ENCODE measurements at regions of chr16 and their contacts with region 1.

Region 1: GRCh38 chr16:30571695-30572600 is at the start of gene ZNF688:
- DNase-seq: peak; percentile 99
- H3K4me3 ChIP-seq: peak within 1 kb of the TSS; percentile 42 to 95 (median 84)
- H3K27ac ChIP-seq: peak within 1 kb of the TSS; percentile 94 to 98 (median 97)
- H3K4me1 ChIP-seq: peaks cover 0 to 24% (median 21%) of the 10 kb centered on the region in 4 donors
- H3K27me3 ChIP-seq: no peaks in the 10 kb centered on the region
- CTCF ChIP-seq: no peak
- EP300 ChIP-seq: no peak
- POLR2A ChIP-seq: peak; percentile 33 to 66
- total RNA-seq, gene ZNF688: 21.9 to 32.8 (median 25.4) TPM

Region 2: DNA sequence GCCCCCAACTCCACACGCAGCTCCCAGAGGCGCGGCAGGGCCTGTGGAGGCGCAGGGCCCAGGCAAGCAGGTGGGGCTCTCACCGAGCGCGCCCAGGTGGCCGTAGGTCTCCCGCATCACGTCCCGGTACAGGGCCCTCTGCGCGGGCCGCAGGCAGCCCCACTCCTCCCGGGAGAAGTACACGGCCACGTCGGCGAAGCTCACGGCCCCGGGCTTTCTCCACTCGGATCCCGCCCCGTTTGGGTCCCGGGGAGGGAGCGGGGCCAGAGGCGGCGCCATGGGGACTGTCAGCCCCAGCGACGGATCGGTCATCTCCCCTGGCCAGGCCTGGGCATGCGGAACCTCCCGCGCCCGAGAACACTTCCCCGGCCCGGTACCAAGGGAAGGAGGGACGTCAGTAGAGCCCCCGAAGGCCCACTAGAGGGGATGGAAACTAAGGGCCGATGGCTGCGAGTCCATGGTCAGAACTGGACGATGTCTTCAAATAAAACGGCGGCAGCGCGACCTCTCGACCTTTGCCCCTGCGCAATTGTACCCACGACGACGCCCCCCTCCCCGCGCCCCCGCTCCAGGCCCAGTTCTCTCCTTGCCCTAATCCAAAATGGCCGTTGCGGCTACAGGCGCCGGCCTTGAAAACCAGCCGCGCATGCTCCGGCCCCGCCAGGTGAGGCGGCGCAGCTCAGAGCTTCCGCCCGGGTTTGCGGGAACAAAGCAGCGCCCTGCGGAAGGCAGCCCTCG is 37.4 kb before region 1 on chr16 and contains the start of gene ZNF747:
- intact Hi-C with region 1: loop called (anchors 5 kb)
- DNase-seq: peak; percentile 97
- H3K4me3 ChIP-seq: peak within 1 kb of the TSS; percentile 45 to 85 (median 66)
- H3K27ac ChIP-seq: peak within 1 kb of the TSS; percentile 89 to 97 (median 94)
- H3K4me1 ChIP-seq: peaks cover 0 to 31% (median 25%) of the 10 kb centered on the region in 4 donors
- H3K27me3 ChIP-seq: no peaks in the 10 kb centered on the region
- CTCF ChIP-seq: no peak
- EP300 ChIP-seq: no peak
- POLR2A ChIP-seq: peak; percentile 50 to 65
- total RNA-seq, gene ZNF747: 10.3 to 15.5 (median 13.1) TPM

Region 3: GRCh38 chr16:30557957-30558788 is 13.8 kb before region 1 on chr16 and contains the start of gene ZNF764:
- intact Hi-C with region 1: loop called (anchors 1 kb)
- DNase-seq: peak; percentile 99
- H3K4me3 ChIP-seq: peak within 1 kb of the TSS; percentile 49 to 87 (median 84)
- H3K27ac ChIP-seq: peak within 1 kb of the TSS; percentile 89 to 98 (median 96)
- H3K4me1 ChIP-seq: peaks cover 0 to 32% (median 28%) of the 10 kb centered on the region in 4 donors
- H3K27me3 ChIP-seq: no peaks in the 10 kb centered on the region
- CTCF ChIP-seq: no peak
- EP300 ChIP-seq: no peak
- POLR2A ChIP-seq: peak in 1 of 2 donors; percentile 22
- total RNA-seq, gene ZNF764: 6.1 to 8.6 (median 8.1) TPM

Region 4: DNA sequence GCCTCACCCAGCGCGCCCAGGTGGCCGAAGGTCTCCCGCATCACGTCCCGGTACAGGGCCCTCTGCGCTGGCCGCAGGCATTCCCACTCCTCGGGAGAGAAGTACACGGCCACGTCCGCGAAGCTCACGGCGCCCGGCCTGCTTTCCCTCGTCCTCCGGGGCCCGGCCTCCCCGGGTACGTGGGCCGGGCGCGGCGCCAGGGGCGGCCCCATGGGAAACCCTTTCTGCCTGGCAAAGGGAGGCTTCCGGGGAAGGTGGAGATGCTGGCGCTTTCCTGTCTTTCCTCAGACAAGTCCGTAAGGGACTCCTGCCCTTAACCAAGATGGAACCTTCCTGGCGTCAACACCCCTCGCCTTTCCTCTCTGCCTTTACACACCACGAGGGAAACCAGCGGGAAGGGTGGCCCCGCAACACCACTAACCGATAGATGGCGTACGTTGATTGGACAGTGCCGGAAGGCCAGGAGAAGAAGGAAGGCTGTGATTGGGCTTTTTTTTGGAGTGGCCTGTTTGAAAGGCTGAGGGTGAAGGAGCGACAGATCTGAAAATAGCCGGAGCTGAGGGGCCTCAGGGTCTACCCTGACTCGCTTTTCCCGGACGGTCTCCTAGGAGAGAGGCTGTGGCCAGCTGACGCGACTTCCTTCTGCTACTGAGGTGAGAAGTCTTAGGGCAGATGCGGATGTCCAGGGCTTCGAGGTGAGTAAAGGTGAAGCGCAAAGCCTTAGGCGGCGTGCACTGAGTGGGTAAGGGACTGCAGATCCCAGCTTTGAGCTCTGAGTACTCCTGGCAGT is 13.6 kb after region 1 on chr16 and contains the start of gene ZNF785:
- intact Hi-C with region 1: loop called (anchors 1 kb)
- DNase-seq: peak; percentile 99
- H3K4me3 ChIP-seq: peak within 1 kb of the TSS; percentile 59 to 88 (median 70)
- H3K27ac ChIP-seq: peak within 1 kb of the TSS; percentile 91 to 94 (median 94)
- H3K4me1 ChIP-seq: peaks cover 0 to 29% (median 28%) of the 10 kb centered on the region in 4 donors
- H3K27me3 ChIP-seq: no peaks in the 10 kb centered on the region
- CTCF ChIP-seq: no peak
- EP300 ChIP-seq: no peak
- POLR2A ChIP-seq: no peak
- total RNA-seq, gene ZNF785: 5.9 to 19.9 (median 7.9) TPM

Region 5: DNA sequence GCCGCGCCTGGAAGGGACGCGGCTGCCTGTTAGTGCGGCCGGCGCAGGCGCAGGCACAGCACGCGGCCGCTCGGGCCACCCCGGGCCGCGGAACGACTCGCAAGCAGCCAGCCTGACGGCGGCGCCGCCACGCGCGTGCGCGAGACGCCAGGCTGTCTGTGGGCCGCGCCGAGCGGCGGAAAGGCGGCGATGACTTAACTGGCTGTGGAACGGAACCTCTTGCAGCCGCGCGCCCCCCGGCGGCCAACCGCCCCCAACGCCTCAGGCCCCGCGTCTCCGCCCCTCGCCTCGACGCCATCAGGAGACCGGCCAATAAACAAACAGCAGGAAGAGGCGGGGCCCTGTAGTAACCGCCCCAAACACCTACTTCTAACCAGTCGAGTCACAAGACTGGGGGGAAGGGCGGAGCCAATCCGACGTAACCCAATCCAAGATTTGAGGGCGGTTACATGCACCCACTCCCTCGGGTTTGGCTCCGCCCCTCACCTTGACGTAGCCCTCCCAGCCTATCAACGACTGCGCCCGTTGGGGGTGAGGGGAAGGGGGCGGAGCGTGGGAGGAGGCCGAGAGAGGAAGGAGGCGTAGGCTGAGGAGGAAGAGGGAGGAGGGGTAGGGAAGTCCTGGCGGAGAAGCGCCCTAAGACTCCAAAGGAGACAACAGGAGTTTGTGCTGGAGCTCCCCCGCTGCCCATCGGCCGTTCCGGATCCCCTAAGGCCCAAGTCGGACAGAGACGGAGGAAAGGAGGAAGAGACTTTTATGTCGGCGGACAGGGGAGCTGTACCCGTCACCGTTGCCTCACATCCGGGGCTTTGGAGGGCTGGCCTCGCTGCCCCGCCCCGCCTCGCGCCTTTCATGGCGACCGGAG is 86.2 kb after region 1 on chr16 and contains the start of gene FBRS:
- intact Hi-C with region 1: loop called (anchors 2 kb)
- DNase-seq: peak; percentile 100
- H3K4me3 ChIP-seq: peak within 1 kb of the TSS; percentile 91 to 99 (median 97)
- H3K27ac ChIP-seq: peak within 1 kb of the TSS; percentile 96 to 98 (median 97)
- H3K4me1 ChIP-seq: peaks cover 0 to 58% (median 53%) of the 10 kb centered on the region in 4 donors
- H3K27me3 ChIP-seq: no peaks in the 10 kb centered on the region
- CTCF ChIP-seq: peak in 3 of 4 experiments; percentile 8 to 66 (median 38)
- EP300 ChIP-seq: peak in 2 of 4 donors; percentile 49 to 52
- POLR2A ChIP-seq: peak; percentile 78 to 94
- total RNA-seq, gene FBRS: 12.5 to 29.6 (median 22.7) TPM

Measured in sigmoid colon (tissue), 7 donors.